ENCODE measurements at regions of chr2 and their contacts with region 1.

Region 1: GRCh38 chr2:172208791-172209325 is 106.2 kb upstream of the DLX2 start:
- DNase-seq: peak; percentile 56
- H3K4me3 Mint-ChIP-seq: peak overlapping the region; percentile 41
- H3K27ac Mint-ChIP-seq: peak overlapping the region; percentile 91
- H3K4me1 Mint-ChIP-seq: peaks cover 26% of the 10 kb centered on the region
- H3K27me3 Mint-ChIP-seq: no peaks in the 10 kb centered on the region
- CTCF ChIP-seq: no peak

Region 2: GRCh38 chr2:172172513-172173173 is 36.2 kb before region 1 on chr2:
- CTCF ChIA-PET with region 1: interaction called, 11 read pairs
- POLR2A ChIA-PET with region 1: interaction called, 23 read pairs
- intact Hi-C with region 1: loop called (anchors 5 kb)
- DNase-seq: peak; percentile 74
- H3K4me3 Mint-ChIP-seq: peak overlapping the region; percentile 66
- H3K27ac Mint-ChIP-seq: no peak overlapping the region
- H3K4me1 Mint-ChIP-seq: no peaks in the 10 kb centered on the region
- H3K27me3 Mint-ChIP-seq: no peaks in the 10 kb centered on the region
- CTCF ChIP-seq: peak; percentile 93

Region 3: GRCh38 chr2:172179045-172179701 is 29.7 kb before region 1 on chr2:
- CTCF ChIA-PET with region 1: interaction called, 11 read pairs
- POLR2A ChIA-PET with region 1: interaction called, 23 read pairs
- intact Hi-C with region 1: loop called (anchors 5 kb)
- DNase-seq: peak; percentile 89
- H3K4me3 Mint-ChIP-seq: no peak overlapping the region
- H3K27ac Mint-ChIP-seq: peak overlapping the region; percentile 9
- H3K4me1 Mint-ChIP-seq: peaks cover 28% of the 10 kb centered on the region
- H3K27me3 Mint-ChIP-seq: no peaks in the 10 kb centered on the region
- CTCF ChIP-seq: no peak

Region 4: DNA sequence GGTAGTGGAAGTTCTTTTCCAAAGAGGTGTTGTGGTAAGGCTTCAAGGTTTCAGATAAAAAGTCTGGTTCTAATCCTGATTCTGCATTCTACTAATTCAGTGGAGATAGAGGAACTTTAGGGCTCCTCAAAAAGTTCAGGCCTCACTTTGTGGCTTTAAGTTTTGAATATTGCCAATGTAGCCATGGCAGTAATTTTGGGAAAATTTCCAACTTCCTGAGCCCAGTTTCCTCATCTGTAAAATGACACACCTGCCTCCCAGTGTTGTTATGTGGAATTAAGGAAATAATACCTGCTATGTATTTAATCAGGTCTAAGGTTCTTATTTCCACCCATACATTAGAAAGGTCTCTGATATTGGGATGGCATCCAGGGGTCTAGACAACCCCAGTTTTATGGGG is 71.0 kb after region 1 on chr2:
- CTCF ChIA-PET with region 1: interaction called, 17 read pairs
- POLR2A ChIA-PET with region 1: interaction called, 3 read pairs
- intact Hi-C with region 1: no loop called
- DNase-seq: peak; percentile 66
- H3K4me3 Mint-ChIP-seq: no peak overlapping the region
- H3K27ac Mint-ChIP-seq: no peak overlapping the region
- H3K4me1 Mint-ChIP-seq: peaks cover 25% of the 10 kb centered on the region
- H3K27me3 Mint-ChIP-seq: no peaks in the 10 kb centered on the region
- CTCF ChIP-seq: peak; percentile 11

Region 5: GRCh38 chr2:172380436-172381274 is 171.8 kb after region 1 on chr2:
- CTCF ChIA-PET with region 1: no interaction called
- POLR2A ChIA-PET with region 1: no interaction called
- intact Hi-C with region 1: no loop called
- DNase-seq: no peak
- H3K4me3 Mint-ChIP-seq: no peak overlapping the region
- H3K27ac Mint-ChIP-seq: no peak overlapping the region
- H3K4me1 Mint-ChIP-seq: no peaks in the 10 kb centered on the region
- H3K27me3 Mint-ChIP-seq: no peaks in the 10 kb centered on the region
- CTCF ChIP-seq: no peak

Measured in MCF 10A (cell line).